WTC11 (cell line): ENCODE measurements at regions of chr1 and their contacts with region 1.

Region 1: DNA sequence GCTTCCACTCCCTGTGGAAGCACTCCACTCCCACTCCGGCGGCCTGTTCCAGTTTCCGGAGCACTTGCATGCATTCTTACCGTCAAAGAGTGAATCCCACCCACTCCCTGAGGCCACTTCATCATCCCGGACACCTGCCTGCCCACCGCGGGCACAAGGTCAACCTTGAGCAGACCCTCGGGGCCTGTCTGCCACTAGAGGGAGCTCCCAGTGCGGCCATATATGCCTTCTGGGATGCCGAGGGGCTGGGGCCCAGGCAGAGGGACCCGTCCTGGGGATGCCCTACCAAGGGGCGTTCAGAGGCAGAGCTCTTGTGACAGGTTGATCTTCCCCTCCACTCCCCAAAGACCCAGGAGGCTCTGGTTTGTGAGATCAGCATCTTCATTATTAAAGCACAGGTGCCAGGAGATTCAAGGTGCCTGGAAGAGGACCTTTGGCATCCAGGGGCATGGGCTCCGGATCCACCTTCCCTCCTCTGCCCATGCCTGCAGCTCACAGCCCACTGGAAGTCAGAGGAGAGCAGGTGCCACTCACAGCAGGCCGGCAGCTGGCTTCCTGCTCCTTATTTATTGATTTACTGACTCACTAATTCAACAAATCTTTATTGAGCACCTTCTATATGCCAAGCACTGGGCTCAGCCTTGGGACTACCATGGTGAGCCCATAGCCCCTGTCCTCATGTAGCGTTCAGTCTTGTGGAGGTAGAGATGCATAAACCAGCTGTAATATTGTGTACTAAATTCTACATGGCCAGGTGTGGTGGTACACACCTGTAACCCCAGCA is 47.3 kb downstream of the UBIAD1 start:
- DNase-seq: peak; percentile 91
- ATAC-seq: peak; percentile 90
- H3K4me3 Mint-ChIP-seq: no peak overlapping the region
- H3K27ac Mint-ChIP-seq: no peak overlapping the region
- H3K4me1 Mint-ChIP-seq: peaks cover 16% of the 10 kb centered on the region
- H3K27me3 Mint-ChIP-seq: no peaks in the 10 kb centered on the region
- CTCF ChIP-seq: peak; percentile 81

Region 2: DNA sequence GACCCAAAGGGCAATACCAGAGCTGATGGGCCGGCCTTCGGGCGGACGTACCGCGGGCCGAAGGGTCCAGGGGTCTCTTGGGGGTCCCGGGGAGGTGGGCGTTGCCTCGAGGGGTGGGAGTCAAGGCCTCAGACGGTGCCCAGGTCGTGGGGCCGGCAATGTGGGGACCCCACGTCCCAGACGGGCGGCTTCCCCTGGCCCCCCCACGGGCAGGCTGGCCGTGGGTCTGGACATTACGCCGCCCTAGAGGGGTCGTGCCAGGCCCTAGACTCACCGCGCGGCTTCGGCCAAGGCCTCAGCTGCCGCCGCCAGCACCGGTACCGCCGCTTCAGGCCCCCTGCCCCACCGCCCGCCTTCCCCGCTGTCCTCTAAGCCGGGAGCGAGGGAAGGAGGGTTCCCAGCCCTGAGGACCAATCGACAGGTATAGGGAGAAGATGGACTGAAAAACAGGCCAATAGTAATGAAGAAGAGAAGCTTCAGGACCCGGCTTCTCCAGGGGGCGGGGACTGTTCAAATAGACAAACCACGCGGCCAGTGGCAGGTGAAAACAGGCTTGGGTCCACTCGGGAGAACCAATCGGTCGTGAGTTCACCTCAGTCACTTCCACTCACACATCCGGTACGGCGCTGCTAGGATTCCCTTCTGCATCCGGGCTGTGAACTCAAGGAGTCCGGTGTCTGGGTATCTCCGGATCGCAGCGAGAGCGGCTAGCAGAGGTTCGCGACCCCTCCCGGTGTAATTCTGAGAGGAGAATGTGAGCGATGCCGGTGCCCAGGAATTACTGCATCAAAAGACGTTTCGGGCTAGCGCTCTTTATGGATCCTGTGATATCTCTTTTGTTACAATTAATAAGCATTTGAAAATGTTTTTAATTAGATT is 57.9 kb before region 1 on chr1 and contains the start of gene MTOR:
- CTCF ChIA-PET with region 1: interaction called, 13 read pairs
- POLR2A ChIA-PET with region 1: no interaction called
- DNase-seq: peak; percentile 97
- ATAC-seq: peak; percentile 98
- H3K4me3 Mint-ChIP-seq: peak within 1 kb of the TSS; percentile 97
- H3K27ac Mint-ChIP-seq: peak within 1 kb of the TSS; percentile 98
- H3K4me1 Mint-ChIP-seq: peaks cover 9% of the 10 kb centered on the region
- H3K27me3 Mint-ChIP-seq: no peaks in the 10 kb centered on the region
- CTCF ChIP-seq: no peak
- total RNA-seq, gene MTOR: 63.1 to 66.7 TPM (median 65.0 TPM) in 3 replicates

Region 3: GRCh38 chr1:11335417-11336056 is 15.2 kb after region 1 on chr1:
- CTCF ChIA-PET with region 1: interaction called, 18 read pairs
- POLR2A ChIA-PET with region 1: no interaction called
- DNase-seq: no peak
- ATAC-seq: no peak
- H3K4me3 Mint-ChIP-seq: no peak overlapping the region
- H3K27ac Mint-ChIP-seq: 0 out of 2 replicates have a peak overlapping the region, but pooled peaks have one; percentile 60
- H3K4me1 Mint-ChIP-seq: peaks cover 41% of the 10 kb centered on the region
- H3K27me3 Mint-ChIP-seq: peaks cover 5% of the 10 kb centered on the region; the same call in 1 of the 2 replicates
- CTCF ChIP-seq: no peak

Region 4: GRCh38 chr1:11355559-11356475 is 35.5 kb after region 1 on chr1:
- CTCF ChIA-PET with region 1: interaction called, 16 read pairs
- POLR2A ChIA-PET with region 1: interaction called, 3 read pairs
- DNase-seq: peak; percentile 63
- ATAC-seq: peak; percentile 82
- H3K4me3 Mint-ChIP-seq: peak overlapping the region; percentile 62
- H3K27ac Mint-ChIP-seq: peak overlapping the region; percentile 91
- H3K4me1 Mint-ChIP-seq: peaks cover 69% of the 10 kb centered on the region
- H3K27me3 Mint-ChIP-seq: peaks cover 64% of the 10 kb centered on the region
- CTCF ChIP-seq: no peak

Region 5: GRCh38 chr1:11364170-11364569 is 43.8 kb after region 1 on chr1:
- CTCF ChIA-PET with region 1: interaction called, 12 read pairs
- POLR2A ChIA-PET with region 1: no interaction called
- DNase-seq: peak; percentile 39
- ATAC-seq: peak; percentile 55
- H3K4me3 Mint-ChIP-seq: no peak overlapping the region
- H3K27ac Mint-ChIP-seq: no peak overlapping the region
- H3K4me1 Mint-ChIP-seq: peaks cover 26% of the 10 kb centered on the region
- H3K27me3 Mint-ChIP-seq: peaks cover 19% of the 10 kb centered on the region
- CTCF ChIP-seq: peak; percentile 60